ENCODE measurements at regions of chr3 and their contacts with region 1.

Region 1: GRCh38 chr3:30042274-30042859 is 564.0 kb upstream of the TGFBR2 start:
- DNase-seq: peak; percentile 49
- H3K4me3 ChIP-seq: no peak overlapping the region
- H3K27ac ChIP-seq: no peak overlapping the region; a peak in 1 of 4 replicates
- H3K4me1 ChIP-seq: peaks cover 8 to 20% of the 10 kb centered on the region in 2 experiments
- H3K27me3 ChIP-seq: no peaks in the 10 kb centered on the region
- CTCF ChIP-seq: peak; percentile 92
- EP300 ChIP-seq: peak in 1 of 2 experiments; percentile 27; a peak in 1 of 4 replicates
- RAD21 ChIP-seq: peak; percentile 99

Region 2: DNA sequence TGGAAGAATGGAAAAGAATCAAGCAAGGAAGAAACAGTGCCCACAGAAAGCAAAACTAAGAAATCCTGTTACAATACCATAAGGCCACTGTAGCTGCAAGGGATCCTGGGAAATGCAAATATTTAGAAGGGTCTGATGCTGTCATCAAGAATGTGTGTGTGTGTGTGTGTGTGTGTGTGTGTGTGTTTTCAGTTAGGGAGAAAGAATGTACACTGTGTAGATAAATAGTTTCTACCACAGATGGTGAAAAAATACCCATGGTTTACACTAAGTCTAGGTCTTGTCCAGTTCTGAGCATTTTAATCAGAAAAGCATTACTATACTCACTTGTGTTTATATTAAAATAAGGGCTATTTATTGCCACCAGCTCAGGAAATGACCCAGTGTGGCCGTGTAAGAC is 406.5 kb before region 1 on chr3:
- CTCF ChIA-PET with region 1: no interaction called
- POLR2A ChIA-PET with region 1: no interaction called
- DNase-seq: no peak
- H3K4me3 ChIP-seq: no peak overlapping the region; a peak in 1 of 4 replicates
- H3K27ac ChIP-seq: no peak overlapping the region
- H3K4me1 ChIP-seq: peaks cover 0 to 11% of the 10 kb centered on the region in 2 experiments; a peak in 3 of 4 replicates
- H3K27me3 ChIP-seq: no peaks in the 10 kb centered on the region
- CTCF ChIP-seq: no peak
- EP300 ChIP-seq: no peak
- RAD21 ChIP-seq: no peak

Region 3: GRCh38 chr3:29721789-29722188 is 320.6 kb before region 1 on chr3:
- CTCF ChIA-PET with region 1: no interaction called
- POLR2A ChIA-PET with region 1: no interaction called
- DNase-seq: no peak
- H3K4me3 ChIP-seq: no peak overlapping the region
- H3K27ac ChIP-seq: peak overlapping the region in 1 of 2 experiments; percentile 87; a peak in 2 of 4 replicates
- H3K4me1 ChIP-seq: peaks cover 0 to 12% of the 10 kb centered on the region in 2 experiments; a peak in 2 of 4 replicates
- H3K27me3 ChIP-seq: no peaks in the 10 kb centered on the region
- CTCF ChIP-seq: no peak
- EP300 ChIP-seq: no peak
- RAD21 ChIP-seq: no peak

Region 4: DNA sequence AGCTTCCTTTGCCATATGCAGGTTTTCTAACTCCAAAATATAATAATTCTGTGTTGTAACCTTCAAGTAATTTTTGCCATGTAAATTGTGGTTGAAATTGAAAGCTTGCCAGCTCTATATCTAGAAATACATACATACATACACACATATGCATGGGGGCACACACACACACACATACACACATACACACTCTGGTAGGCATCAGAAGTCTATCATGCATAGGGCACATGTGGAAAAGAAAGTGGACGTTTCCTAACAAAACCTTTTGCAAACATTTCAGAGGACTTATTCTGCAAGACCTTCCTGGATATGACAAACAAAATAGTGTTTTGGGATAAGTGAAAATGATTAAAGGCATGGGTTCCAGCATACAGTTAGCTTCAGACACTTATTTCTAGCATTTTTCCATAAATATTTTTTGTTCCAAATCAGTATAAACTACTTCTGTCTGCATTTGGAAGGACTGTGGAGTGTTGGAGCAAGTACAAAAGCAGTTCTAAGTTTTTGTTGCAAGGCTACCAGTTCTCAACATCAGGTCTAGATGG is 182.6 kb before region 1 on chr3:
- CTCF ChIA-PET with region 1: no interaction called
- POLR2A ChIA-PET with region 1: no interaction called
- DNase-seq: no peak
- H3K4me3 ChIP-seq: no peak overlapping the region
- H3K27ac ChIP-seq: no peak overlapping the region
- H3K4me1 ChIP-seq: peaks cover 0 to 2% of the 10 kb centered on the region in 2 experiments; a peak in 1 of 4 replicates
- H3K27me3 ChIP-seq: no peaks in the 10 kb centered on the region
- CTCF ChIP-seq: no peak
- EP300 ChIP-seq: no peak
- RAD21 ChIP-seq: no peak

Region 5: GRCh38 chr3:30012941-30013543 is 29.3 kb before region 1 on chr3:
- CTCF ChIA-PET with region 1: interaction called, 20 read pairs
- POLR2A ChIA-PET with region 1: no interaction called
- DNase-seq: peak; percentile 41
- H3K4me3 ChIP-seq: no peak overlapping the region; a peak in 1 of 4 replicates
- H3K27ac ChIP-seq: no peak overlapping the region
- H3K4me1 ChIP-seq: peaks cover 0 to 2% of the 10 kb centered on the region in 2 experiments; a peak in 2 of 4 replicates
- H3K27me3 ChIP-seq: no peaks in the 10 kb centered on the region
- CTCF ChIP-seq: peak; percentile 80
- EP300 ChIP-seq: no peak
- RAD21 ChIP-seq: peak; percentile 73

Region 6: DNA sequence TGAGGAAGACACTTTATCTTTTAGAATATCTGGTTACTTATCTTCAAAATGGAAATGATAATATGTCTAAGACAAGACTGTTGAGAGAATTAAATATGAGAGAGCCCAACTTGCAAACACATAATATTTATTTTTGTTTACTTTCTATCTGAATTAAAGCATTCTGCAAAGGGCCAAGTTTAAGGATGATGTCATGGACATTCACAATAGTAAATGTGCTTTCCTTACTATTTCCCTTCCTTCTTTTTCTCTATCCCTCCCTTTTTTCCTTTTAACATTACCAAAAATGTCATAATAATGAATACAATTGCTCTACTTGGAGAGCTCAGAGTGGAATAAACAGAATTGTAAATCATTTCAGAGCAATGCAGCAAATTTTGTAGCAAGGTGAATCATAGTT is 11.6 kb before region 1 on chr3:
- CTCF ChIA-PET with region 1: interaction called, 28 read pairs
- POLR2A ChIA-PET with region 1: no interaction called
- DNase-seq: no peak
- H3K4me3 ChIP-seq: no peak overlapping the region
- H3K27ac ChIP-seq: no peak overlapping the region
- H3K4me1 ChIP-seq: peaks cover 0 to 4% of the 10 kb centered on the region in 2 experiments; a peak in 1 of 4 replicates
- H3K27me3 ChIP-seq: no peaks in the 10 kb centered on the region
- CTCF ChIP-seq: no peak
- EP300 ChIP-seq: no peak
- RAD21 ChIP-seq: no peak

Region 7: DNA sequence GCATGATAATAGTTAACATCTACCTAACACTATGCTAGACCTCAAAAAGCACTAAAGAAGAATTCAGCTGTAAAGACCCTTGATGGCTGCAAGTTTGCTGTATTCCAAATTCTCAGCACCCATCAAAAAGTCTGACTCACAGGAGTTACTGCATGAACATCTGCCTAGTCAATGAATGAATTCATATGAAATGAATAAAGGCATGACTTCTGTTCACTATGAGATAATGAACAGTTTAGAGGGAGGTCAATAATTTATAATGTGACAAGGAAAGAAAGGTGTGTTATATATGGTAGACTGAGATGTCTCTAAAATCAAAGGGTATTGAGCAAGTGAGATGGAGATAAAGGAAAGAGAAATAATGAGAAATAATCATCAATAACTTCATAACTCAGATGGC is 55.9 kb after region 1 on chr3:
- CTCF ChIA-PET with region 1: no interaction called
- POLR2A ChIA-PET with region 1: no interaction called
- DNase-seq: no peak
- H3K4me3 ChIP-seq: no peak overlapping the region
- H3K27ac ChIP-seq: peak overlapping the region in 1 of 2 experiments; percentile 33; a peak in 2 of 4 replicates
- H3K4me1 ChIP-seq: peaks cover 0 to 13% of the 10 kb centered on the region in 2 experiments; a peak in 1 of 4 replicates
- H3K27me3 ChIP-seq: no peaks in the 10 kb centered on the region
- CTCF ChIP-seq: no peak
- EP300 ChIP-seq: no peak
- RAD21 ChIP-seq: no peak

Region 8: GRCh38 chr3:30188713-30189112 is 146.3 kb after region 1 on chr3:
- CTCF ChIA-PET with region 1: interaction called, 31 read pairs
- POLR2A ChIA-PET with region 1: no interaction called
- DNase-seq: no peak
- H3K4me3 ChIP-seq: no peak overlapping the region
- H3K27ac ChIP-seq: peak overlapping the region in 1 of 2 experiments; percentile 11; a peak in 1 of 4 replicates
- H3K4me1 ChIP-seq: peaks cover 10 to 21% of the 10 kb centered on the region in 2 experiments; a peak in 3 of 4 replicates
- H3K27me3 ChIP-seq: no peaks in the 10 kb centered on the region
- CTCF ChIP-seq: no peak
- EP300 ChIP-seq: peak in 1 of 2 experiments; percentile 61; a peak in 3 of 4 replicates
- RAD21 ChIP-seq: no peak

Region 9: GRCh38 chr3:30206051-30206450 is 163.7 kb after region 1 on chr3:
- CTCF ChIA-PET with region 1: interaction called, 14 read pairs
- POLR2A ChIA-PET with region 1: no interaction called
- DNase-seq: no peak
- H3K4me3 ChIP-seq: no peak overlapping the region
- H3K27ac ChIP-seq: no peak overlapping the region
- H3K4me1 ChIP-seq: no peaks in the 10 kb centered on the region
- H3K27me3 ChIP-seq: no peaks in the 10 kb centered on the region
- CTCF ChIP-seq: no peak
- EP300 ChIP-seq: no peak
- RAD21 ChIP-seq: no peak

Region 10: DNA sequence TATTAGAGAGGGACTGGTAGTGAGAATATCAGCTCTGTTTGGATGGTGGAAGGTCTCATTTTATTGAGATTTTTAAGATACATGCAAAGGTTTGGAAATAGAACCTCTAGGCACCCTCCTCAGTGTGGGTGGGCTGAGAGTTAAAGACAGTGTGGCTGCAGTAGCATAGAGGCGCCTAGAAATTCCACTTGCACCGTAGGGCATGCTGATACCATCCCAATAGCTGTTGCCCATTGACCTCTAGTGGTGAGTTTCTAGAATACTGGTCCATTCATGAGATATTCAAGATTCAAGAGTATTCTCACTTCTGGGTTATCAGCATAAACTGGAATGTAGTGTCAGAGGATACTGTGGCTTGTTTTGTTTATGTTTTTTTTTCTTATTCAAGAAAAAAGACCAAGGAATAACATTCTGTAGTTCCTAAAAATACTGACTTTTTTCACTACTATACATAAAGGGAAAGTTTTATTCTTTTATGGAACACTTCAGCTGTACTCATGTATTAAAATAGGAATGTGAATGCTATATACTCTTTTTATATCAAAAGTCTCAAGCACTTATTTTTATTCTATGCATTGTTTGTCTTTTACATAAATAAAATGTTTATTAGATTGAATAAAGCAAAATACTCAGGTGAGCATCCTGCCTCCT is 651.2 kb after region 1 on chr3:
- CTCF ChIA-PET with region 1: interaction called, 117 read pairs
- POLR2A ChIA-PET with region 1: no interaction called
- DNase-seq: peak; percentile 55
- H3K4me3 ChIP-seq: no peak overlapping the region; a peak in 1 of 4 replicates
- H3K27ac ChIP-seq: no peak overlapping the region; a peak in 1 of 4 replicates
- H3K4me1 ChIP-seq: peaks cover 27 to 32% of the 10 kb centered on the region in 2 experiments
- H3K27me3 ChIP-seq: no peaks in the 10 kb centered on the region
- CTCF ChIP-seq: peak; percentile 89
- EP300 ChIP-seq: no peak
- RAD21 ChIP-seq: peak; percentile 100

Region 11: DNA sequence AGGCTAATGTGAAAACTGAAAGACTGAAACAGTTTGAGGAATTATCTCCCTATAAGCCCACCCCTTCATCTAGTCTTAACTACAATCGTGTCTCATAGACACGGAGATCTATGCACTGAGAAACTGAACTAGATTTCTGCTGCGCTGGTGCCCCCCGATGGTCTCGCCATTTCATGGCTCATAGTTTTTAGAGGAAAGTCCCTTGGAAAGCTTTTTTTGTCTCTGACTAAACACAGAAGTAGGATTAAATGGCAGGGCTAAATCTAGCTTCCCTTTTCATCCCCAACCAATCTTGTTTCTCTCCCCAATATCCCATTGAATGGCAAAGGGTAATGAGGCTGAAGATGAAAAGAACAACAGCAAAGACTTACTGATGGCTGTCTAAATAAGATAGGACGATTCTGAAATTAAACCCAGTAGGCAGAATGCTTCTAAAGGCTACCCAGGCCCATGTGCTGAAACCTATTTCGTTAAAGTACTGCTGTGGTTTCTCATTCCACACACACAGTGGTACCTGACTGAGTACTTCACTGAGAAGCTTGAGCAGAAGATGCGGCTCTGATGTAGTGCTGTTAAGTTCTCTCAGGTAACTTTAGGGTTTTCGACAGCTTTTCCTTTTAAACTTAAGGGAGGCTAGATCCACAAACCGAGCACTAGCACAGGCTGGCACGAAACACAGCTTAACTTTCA is 709.4 kb after region 1 on chr3:
- CTCF ChIA-PET with region 1: interaction called, 18 read pairs
- POLR2A ChIA-PET with region 1: interaction called, 3 read pairs
- DNase-seq: peak; percentile 24
- H3K4me3 ChIP-seq: no peak overlapping the region
- H3K27ac ChIP-seq: no peak overlapping the region
- H3K4me1 ChIP-seq: peaks cover 0 to 29% of the 10 kb centered on the region in 2 experiments; a peak in 2 of 4 replicates
- H3K27me3 ChIP-seq: no peaks in the 10 kb centered on the region
- CTCF ChIP-seq: peak; percentile 69
- EP300 ChIP-seq: no peak
- RAD21 ChIP-seq: peak; percentile 84

Measured in SK-N-SH (cell line).